Heart left ventricle (tissue), 16 donors: ENCODE measurements at regions of chr1 and their contacts with region 1.

Region 1: GRCh38 chr1:117599286-117600221 is 6.3 kb upstream of the TENT5C start:
- DNase-seq: peak in 1 of 5 donors; percentile 39
- ATAC-seq: peak; percentile 71 to 77 (median 74)
- H3K4me3 ChIP-seq: no peak overlapping the region
- H3K27ac ChIP-seq: peak overlapping the region in 1 of 12 donors; percentile 59
- H3K4me1 ChIP-seq: peaks cover 0 to 17% (median 0%) of the 10 kb centered on the region in 12 donors
- H3K27me3 ChIP-seq: no peaks in the 10 kb centered on the region
- CTCF ChIP-seq: no peak
- POLR2A ChIP-seq: no peak

Region 2: DNA sequence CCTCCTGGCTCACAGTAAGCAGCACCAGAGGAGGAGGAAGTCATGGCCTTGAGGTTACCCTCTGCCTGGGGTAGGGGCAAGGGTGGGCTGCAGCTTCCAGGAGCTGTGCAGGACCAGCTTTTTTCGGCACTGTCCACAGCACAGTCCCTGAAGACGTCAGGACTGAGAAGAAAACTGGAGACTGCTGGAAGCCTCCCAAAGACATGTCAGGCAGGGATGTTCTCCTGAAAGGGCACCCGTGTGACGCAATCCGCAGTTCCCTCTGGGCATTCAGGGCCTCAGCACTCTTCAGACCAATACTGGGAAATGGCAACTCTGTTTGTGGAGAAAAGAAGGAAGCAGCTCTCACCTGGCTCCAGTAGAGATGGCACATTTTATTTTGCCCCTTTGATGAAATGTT is 58.6 kb before region 1 on chr1:
- intact Hi-C with region 1: loop called in 2 of 10 experiments (anchors 10 kb)
- DNase-seq: no peak
- ATAC-seq: no peak
- H3K4me3 ChIP-seq: no peak overlapping the region
- H3K27ac ChIP-seq: no peak overlapping the region
- H3K4me1 ChIP-seq: no peaks in the 10 kb centered on the region
- H3K27me3 ChIP-seq: no peaks in the 10 kb centered on the region
- CTCF ChIP-seq: no peak
- POLR2A ChIP-seq: no peak

Region 3: GRCh38 chr1:117685936-117686806 is 86.6 kb after region 1 on chr1:
- intact Hi-C with region 1: no loop called
- DNase-seq: no peak
- ATAC-seq: peak in 1 of 4 donors; percentile 7
- H3K4me3 ChIP-seq: no peak overlapping the region
- H3K27ac ChIP-seq: peak overlapping the region in 2 of 12 donors; percentile 37 to 56
- H3K4me1 ChIP-seq: peaks cover 0 to 46% (median 18%) of the 10 kb centered on the region in 12 donors
- H3K27me3 ChIP-seq: no peaks in the 10 kb centered on the region
- CTCF ChIP-seq: no peak
- POLR2A ChIP-seq: no peak